ENCODE measurements at regions of chr15 and their contacts with region 1.

Region 1: DNA sequence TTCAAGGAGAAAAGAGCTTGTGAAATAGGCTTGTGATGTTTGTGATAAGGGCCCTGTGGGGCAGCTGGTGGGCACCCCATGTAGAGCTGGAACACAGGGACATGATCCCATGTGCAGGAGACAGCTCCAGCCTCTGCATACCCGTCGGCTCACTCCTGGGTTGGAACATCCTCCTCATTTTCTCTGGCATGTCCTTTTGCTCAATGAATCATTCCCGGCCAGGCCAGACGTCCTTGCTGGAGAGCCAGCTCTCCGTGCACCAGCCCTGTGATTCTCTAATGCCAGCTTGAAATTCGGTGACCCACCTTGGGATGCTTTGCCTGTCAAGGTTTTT is 77.3 kb downstream of the SMAD3 start:
- DNase-seq: peak; percentile 80
- H3K4me3 ChIP-seq: no peak overlapping the region
- H3K27ac ChIP-seq: peak overlapping the region; percentile 42
- H3K4me1 ChIP-seq: peaks cover 92% of the 10 kb centered on the region
- H3K27me3 ChIP-seq: no peaks in the 10 kb centered on the region
- CTCF ChIP-seq: no peak
- POLR2A ChIP-seq: no peak

Region 2: DNA sequence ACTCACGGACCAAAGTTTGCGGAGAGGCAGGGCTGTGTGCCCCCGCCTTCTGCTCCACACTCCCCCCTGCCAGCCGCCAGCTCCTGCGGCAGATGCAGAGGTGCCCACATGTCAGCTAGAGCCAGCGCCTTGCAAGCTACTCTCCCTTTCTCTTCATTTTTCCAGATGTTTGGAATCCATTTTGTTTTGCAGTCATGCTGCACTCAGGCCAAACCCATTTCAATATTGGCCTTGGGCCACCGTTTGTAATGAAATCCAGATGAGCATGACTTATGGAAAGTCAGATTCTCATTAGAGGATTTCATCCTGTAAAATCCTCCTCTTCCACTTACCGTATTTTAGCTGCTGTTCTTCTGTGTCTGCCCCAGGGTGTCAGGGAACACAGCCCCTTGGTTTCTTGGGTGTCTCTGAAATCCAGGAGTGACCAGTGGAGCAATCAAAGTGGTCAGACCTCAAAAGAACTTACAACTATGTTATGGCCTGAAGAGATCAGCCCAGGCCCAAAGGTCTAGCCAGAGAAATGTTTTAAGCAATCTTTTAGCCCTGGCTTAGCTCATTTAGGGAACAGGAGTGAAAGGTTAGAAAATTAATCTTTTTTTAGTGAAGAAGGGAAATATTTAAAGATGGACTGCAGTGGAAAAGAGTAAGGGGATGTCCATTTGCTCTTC is 46.0 kb after region 1 on chr15:
- CTCF ChIA-PET with region 1: interaction called, 3 read pairs
- POLR2A ChIA-PET with region 1: interaction called, 11 read pairs
- dilution Hi-C with region 1: no loop called
- intact Hi-C with region 1: no loop called
- DNase-seq: no peak
- H3K4me3 ChIP-seq: no peak overlapping the region
- H3K27ac ChIP-seq: no peak overlapping the region
- H3K4me1 ChIP-seq: no peaks in the 10 kb centered on the region
- H3K27me3 ChIP-seq: no peaks in the 10 kb centered on the region
- CTCF ChIP-seq: no peak
- POLR2A ChIP-seq: no peak